Stomach (tissue), 19 donors: ENCODE measurements at regions of chr20 and their contacts with region 1.

Region 1: GRCh38 chr20:35269055-35269781 is 8.7 kb downstream of the MMP24OS start:
- DNase-seq: peak; percentile 69 to 85
- H3K4me3 ChIP-seq: no peak overlapping the region
- H3K27ac ChIP-seq: peak overlapping the region in 2 of 5 donors; percentile 32 to 34
- H3K4me1 ChIP-seq: peaks cover 0 to 15% (median 11%) of the 10 kb centered on the region in 4 donors
- H3K27me3 ChIP-seq: no peaks in the 10 kb centered on the region
- CTCF ChIP-seq: peak in 5 of 7 experiments; percentile 63 to 85 (median 67)
- EP300 ChIP-seq: no peak
- POLR2A ChIP-seq: no peak

Region 2: DNA sequence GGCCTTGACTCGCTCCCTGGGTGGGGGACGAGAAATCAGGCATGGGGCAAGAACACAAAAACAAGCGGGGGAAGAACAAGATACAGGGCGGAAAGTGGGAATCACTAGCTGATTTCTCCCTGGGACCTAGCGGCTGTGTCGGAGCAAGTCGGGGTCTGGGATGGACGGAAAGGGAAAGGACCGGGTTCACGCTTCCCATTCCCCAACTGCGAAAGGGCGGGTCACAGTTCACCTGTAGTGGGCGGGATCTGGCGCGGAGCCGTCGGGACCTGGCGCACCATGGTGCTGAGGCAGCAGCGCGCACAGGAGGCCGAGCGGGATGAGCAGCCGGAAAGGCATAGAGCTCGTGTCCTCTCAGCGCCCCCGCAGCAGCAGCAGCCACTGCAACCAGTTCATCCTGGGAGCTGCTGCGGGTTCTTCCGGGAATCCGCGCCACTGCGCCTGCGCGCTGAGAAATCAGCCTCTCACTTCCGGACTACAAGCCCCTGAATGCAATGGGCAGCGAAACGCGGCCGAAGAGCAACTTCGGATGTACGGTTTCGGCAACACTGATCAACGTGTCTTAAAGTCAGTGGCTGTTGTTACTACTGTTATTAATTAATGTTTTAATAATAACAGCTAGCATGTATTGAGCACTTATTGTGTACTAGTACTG is 122.2 kb before region 1 on chr20 and contains the start of gene EDEM2:
- intact Hi-C with region 1: loop called (anchors 10 kb)
- DNase-seq: peak; percentile 94 to 98
- H3K4me3 ChIP-seq: peak within 1 kb of the TSS; percentile 52 to 76 (median 72)
- H3K27ac ChIP-seq: peak within 1 kb of the TSS; percentile 81 to 89 (median 83)
- H3K4me1 ChIP-seq: peaks cover 0 to 35% (median 32%) of the 10 kb centered on the region in 4 donors
- H3K27me3 ChIP-seq: no peaks in the 10 kb centered on the region
- CTCF ChIP-seq: peak in 1 of 7 experiments; percentile 23
- EP300 ChIP-seq: no peak
- POLR2A ChIP-seq: no peak
- total RNA-seq, gene EDEM2: 8.4 to 55.8 (median 15.8) TPM

Region 3: DNA sequence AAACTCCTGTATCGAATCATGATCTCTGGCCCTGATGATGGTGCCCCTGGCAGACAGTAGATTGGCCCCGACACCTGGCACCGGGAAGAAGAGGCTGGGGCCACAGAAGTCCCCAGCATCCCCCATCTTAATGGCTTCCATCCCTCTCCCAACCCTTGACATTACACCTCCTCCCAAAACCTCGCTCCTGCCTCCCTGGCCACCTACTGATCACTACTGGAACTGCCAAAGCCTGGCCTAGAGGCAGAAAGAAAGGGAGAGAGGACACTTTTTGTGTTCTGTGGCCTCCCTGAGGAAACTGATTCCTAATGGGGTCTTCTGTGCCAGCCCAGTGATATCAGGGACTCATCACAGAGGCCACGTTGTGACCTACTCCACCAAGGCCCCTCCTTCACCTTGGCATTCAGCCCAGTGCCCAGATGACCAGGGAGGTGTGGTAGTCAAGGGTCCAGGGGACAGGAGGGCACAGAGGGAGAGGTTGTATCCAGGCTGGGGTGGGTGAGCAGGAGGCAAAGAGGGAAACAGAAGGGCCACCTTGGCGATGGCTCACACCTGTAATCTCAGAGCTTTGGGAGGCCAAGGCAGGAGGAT is 254.2 kb after region 1 on chr20:
- intact Hi-C with region 1: no loop called
- DNase-seq: peak in 1 of 2 donors; percentile 17
- H3K4me3 ChIP-seq: no peak overlapping the region
- H3K27ac ChIP-seq: no peak overlapping the region
- H3K4me1 ChIP-seq: no peaks in the 10 kb centered on the region
- H3K27me3 ChIP-seq: no peaks in the 10 kb centered on the region
- CTCF ChIP-seq: peak in 4 of 7 experiments; percentile 37 to 46 (median 40)
- EP300 ChIP-seq: no peak
- POLR2A ChIP-seq: no peak